WTC11 (cell line): ENCODE measurements at regions of chr19 and their contacts with region 1.

Region 1: DNA sequence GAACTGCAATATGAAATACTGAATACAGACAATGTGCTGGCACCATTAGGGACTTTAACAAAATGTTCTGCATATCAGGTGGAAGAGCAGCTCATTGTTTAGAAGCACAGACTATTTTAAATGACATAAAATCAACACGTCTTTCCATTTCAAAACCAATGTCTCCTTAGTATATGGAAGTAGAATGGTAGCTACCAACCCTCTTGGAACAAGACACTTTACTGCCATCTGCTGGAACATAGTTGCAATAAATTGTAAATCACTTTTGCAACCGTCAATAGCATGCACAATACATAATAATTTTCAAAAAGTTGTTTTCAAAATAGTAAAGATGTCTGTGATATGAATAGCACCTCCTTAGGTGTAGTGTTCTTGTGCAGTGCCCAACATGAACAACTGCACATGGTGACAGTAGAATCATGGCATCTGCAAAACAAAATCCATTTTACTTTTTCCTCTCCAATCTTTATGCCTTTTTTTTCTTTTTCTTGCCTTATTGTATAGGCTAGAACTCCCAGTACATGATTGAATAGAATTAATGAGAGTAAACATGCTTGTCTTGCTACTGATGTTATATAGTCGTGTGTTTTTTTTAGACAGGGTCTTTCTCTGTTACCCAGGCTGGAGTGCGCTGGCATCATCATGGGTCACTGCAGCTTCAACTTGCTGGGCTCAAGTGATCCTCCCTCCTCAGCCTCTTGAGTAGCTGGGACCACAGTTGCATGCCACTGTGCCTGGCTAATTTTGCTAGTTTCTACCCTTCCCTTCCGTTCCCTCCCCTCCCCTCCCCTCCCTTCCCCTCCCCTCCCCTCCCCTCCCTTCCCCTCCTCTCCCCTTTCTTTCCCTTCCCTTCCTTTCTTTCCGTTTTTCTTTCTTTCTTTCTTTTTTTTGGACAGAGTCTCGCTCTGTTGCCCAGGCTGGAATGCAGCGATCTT is 7.8 kb upstream of the LYPD5 start:
- DNase-seq: no peak
- ATAC-seq: peak; percentile 39; the same call in 1 of the 2 replicates
- H3K4me3 Mint-ChIP-seq: no peak overlapping the region
- H3K27ac Mint-ChIP-seq: no peak overlapping the region
- H3K4me1 Mint-ChIP-seq: no peaks in the 10 kb centered on the region
- H3K27me3 Mint-ChIP-seq: peaks cover 23% of the 10 kb centered on the region
- CTCF ChIP-seq: peak; percentile 33

Region 2: DNA sequence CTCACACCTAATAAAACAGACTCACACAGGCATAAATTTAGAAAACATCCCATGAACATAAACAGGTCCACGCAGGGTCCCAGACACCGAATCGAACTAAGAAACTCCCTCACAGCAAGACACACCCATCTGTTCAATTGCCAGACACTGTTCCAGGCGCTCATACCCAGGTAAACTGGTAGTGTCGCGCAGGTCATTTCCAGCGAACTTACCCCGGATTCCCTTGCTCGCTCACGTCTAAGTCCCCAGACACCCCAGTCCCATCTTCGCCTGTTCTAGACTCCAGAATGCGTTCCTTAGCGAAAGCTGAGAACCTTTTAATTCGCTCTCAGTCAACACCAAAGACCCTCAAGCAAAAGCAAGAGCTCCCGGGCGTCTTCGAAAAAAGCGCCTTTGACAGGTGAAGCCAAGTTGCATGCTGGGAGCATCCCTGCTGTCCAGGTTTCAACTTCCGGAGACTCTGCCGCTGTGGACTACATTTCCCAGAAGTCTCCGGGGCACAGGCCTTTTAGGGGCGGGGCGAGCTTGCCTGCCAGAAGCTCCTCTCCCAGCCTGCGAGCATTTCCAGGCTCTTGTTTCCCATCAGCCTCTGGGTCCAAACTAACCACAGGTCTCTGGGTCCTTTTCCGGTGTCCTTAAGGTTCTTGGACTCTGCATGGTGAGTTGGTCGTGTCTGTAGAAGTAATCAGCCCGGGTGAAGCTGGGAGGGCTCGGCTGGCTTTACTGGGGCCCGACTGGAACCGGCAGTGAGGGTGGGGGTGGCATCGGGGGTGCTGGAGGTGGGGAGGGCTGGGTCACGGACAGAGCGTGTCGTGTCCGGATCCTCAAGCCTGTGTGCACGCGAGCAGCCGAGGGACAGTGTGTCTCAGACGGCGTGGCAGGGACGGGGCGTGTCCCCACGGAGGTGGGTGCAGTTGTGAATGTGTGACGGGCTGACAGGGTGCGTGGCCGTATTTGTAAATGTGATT is 17.0 kb after region 1 on chr19 and contains the start of gene ZNF283:
- CTCF ChIA-PET with region 1: interaction called, 13 read pairs
- POLR2A ChIA-PET with region 1: no interaction called
- DNase-seq: peak; percentile 91
- ATAC-seq: peak; percentile 99
- H3K4me3 Mint-ChIP-seq: peak within 1 kb of the TSS; percentile 80
- H3K27ac Mint-ChIP-seq: peak within 1 kb of the TSS; percentile 41; the same call in 1 of the 2 replicates
- H3K4me1 Mint-ChIP-seq: peaks cover 7% of the 10 kb centered on the region; the same call in 1 of the 2 replicates
- H3K27me3 Mint-ChIP-seq: peaks cover 34% of the 10 kb centered on the region
- CTCF ChIP-seq: no peak
- total RNA-seq, gene ZNF283: 6.2 to 7.1 TPM (median 6.7 TPM) in 3 replicates

Region 3: GRCh38 chr19:43895727-43896126 is 85.7 kb after region 1 on chr19:
- CTCF ChIA-PET with region 1: no interaction called
- POLR2A ChIA-PET with region 1: no interaction called
- DNase-seq: no peak
- ATAC-seq: no peak
- H3K4me3 Mint-ChIP-seq: no peak overlapping the region
- H3K27ac Mint-ChIP-seq: no peak overlapping the region
- H3K4me1 Mint-ChIP-seq: peaks cover 5% of the 10 kb centered on the region; the same call in 1 of the 2 replicates
- H3K27me3 Mint-ChIP-seq: no peaks in the 10 kb centered on the region
- CTCF ChIP-seq: no peak